PC-3 (cell line): ENCODE measurements at regions of chr5 and their contacts with region 1.

Region 1: GRCh38 chr5:140690941-140691924 is at the starts of genes HARS1 and HARS2:
- DNase-seq: peak; percentile 94
- ATAC-seq: peak; percentile 94
- H3K4me3 ChIP-seq: peak within 1 kb of the TSS; percentile 92
- H3K27ac ChIP-seq: peak within 1 kb of the TSS; percentile 71
- H3K4me1 ChIP-seq: peaks cover 7% of the 10 kb centered on the region; the same call in 1 of the 2 replicates
- H3K27me3 ChIP-seq: no peaks in the 10 kb centered on the region
- CTCF ChIP-seq: no peak
- total RNA-seq, gene HARS1: 76.1 and 87.1 TPM in 2 replicates
- total RNA-seq, gene HARS2: 23.3 and 29.7 TPM in 2 replicates

Region 2: GRCh38 chr5:140664359-140665119 is 26.7 kb before region 1 on chr5 and contains the start of gene WDR55:
- CTCF ChIA-PET with region 1: no interaction called
- POLR2A ChIA-PET with region 1: interaction called, 5 read pairs
- intact Hi-C with region 1: loop called (anchors 1 kb)
- DNase-seq: peak; percentile 96
- ATAC-seq: peak; percentile 95
- H3K4me3 ChIP-seq: peak within 1 kb of the TSS; percentile 95
- H3K27ac ChIP-seq: peak within 1 kb of the TSS; percentile 87
- H3K4me1 ChIP-seq: peaks cover 20% of the 10 kb centered on the region
- H3K27me3 ChIP-seq: no peaks in the 10 kb centered on the region
- CTCF ChIP-seq: no peak
- total RNA-seq, gene WDR55: 21.2 and 27.2 TPM in 2 replicates

Region 3: GRCh38 chr5:141914199-141914743 is 1223.0 kb after region 1 on chr5:
- CTCF ChIA-PET with region 1: no interaction called
- POLR2A ChIA-PET with region 1: no interaction called
- intact Hi-C with region 1: no loop called
- DNase-seq: no peak
- ATAC-seq: no peak
- H3K4me3 ChIP-seq: no peak overlapping the region
- H3K27ac ChIP-seq: no peak overlapping the region
- H3K4me1 ChIP-seq: 0 out of 2 replicates have a peak, but pooled peaks cover under 1% of the 10 kb centered on the region
- H3K27me3 ChIP-seq: no peaks in the 10 kb centered on the region
- CTCF ChIP-seq: no peak